ENCODE measurements at regions of chr7 and their contacts with region 1.

Region 1: GRCh38 chr7:50418086-50418515 is 32.0 kb downstream of the FIGNL1 start:
- DNase-seq: peak; percentile 86
- H3K4me3 ChIP-seq: no peak overlapping the region
- H3K27ac ChIP-seq: no peak overlapping the region
- H3K4me1 ChIP-seq: peaks cover 0 to 10% of the 10 kb centered on the region in 2 experiments; a peak in 1 of 4 replicates
- H3K27me3 ChIP-seq: no peaks in the 10 kb centered on the region
- CTCF ChIP-seq: peak; percentile 96
- EP300 ChIP-seq: no peak
- RAD21 ChIP-seq: peak; percentile 98

Region 2: DNA sequence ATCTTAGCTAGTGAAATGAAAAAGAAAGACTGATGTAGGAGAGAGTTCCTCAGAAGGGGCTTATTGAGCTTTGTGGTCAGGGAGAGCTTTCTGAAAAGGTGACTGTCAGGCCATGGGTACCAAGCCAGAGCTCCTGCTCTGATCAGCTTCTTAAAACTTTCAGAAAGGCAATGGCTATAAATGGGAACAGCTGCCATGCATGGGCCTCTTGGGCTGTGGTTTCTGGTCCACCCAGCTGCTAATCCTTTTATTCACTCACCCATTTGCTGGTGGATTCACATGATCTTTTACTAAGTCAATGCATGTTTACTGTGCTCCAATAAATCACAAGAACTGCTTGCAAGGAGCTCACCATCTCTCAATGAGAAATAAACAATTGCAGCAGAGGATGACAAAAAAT is 265.0 kb before region 1 on chr7:
- CTCF ChIA-PET with region 1: interaction called, 71 read pairs
- POLR2A ChIA-PET with region 1: no interaction called
- DNase-seq: no peak
- H3K4me3 ChIP-seq: no peak overlapping the region
- H3K27ac ChIP-seq: no peak overlapping the region
- H3K4me1 ChIP-seq: no peaks in the 10 kb centered on the region
- H3K27me3 ChIP-seq: no peaks in the 10 kb centered on the region
- CTCF ChIP-seq: no peak
- EP300 ChIP-seq: no peak
- RAD21 ChIP-seq: no peak

Region 3: DNA sequence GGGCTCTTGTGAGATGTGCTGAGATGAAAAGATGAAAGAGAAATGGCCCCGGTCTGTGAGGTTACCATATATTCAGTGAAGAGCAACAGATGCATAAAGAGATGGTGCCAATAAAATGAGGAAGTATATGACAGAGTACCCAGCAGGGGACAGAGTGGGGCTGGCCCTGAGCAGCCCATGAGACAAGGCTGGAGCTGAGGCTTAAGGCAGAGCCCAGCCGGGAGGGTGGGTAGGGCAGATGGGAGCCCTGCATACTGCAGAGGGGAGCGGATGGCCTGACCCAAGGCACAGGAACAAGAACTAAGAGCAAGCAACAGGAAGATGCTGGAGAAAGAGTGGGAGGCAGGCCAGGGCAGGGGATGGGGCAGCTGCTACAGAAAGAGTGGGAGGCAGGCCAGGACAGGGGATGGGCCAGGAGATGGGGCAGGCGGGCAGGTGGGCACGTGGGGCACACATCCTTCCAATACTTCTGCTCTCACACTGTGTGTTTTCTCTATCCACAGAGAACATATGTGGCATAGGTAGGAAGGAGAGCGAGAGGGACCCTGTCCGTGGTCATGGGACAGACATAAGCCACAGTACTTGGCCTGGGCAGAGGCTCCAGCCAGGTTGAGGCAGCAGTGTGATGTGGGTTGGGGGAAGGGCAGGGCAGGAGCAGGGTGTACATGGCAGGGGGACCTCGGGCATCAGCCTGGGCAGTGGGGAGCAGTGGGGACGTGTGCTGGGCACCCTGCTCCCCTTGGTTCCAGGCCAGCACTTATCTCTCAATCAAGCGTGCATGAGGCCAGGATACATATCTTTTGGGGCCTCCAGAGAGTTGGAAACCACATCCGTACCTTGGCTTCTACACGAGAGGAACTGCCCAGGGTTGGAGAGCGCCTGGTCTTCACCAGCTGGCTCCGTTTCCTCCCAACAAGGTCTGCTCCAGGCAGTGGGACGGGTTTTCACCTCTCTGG is 205.2 kb before region 1 on chr7:
- CTCF ChIA-PET with region 1: interaction called, 353 read pairs
- POLR2A ChIA-PET with region 1: no interaction called
- DNase-seq: no peak
- H3K4me3 ChIP-seq: no peak overlapping the region
- H3K27ac ChIP-seq: no peak overlapping the region
- H3K4me1 ChIP-seq: peaks cover 0 to 8% of the 10 kb centered on the region in 2 experiments; a peak in 1 of 4 replicates
- H3K27me3 ChIP-seq: no peaks in the 10 kb centered on the region
- CTCF ChIP-seq: no peak
- EP300 ChIP-seq: no peak
- RAD21 ChIP-seq: no peak

Region 4: GRCh38 chr7:50369143-50370026 is 48.7 kb before region 1 on chr7:
- CTCF ChIA-PET with region 1: interaction called, 12 read pairs
- POLR2A ChIA-PET with region 1: no interaction called
- DNase-seq: peak; percentile 57
- H3K4me3 ChIP-seq: no peak overlapping the region; a peak in 1 of 4 replicates
- H3K27ac ChIP-seq: no peak overlapping the region
- H3K4me1 ChIP-seq: no peaks in the 10 kb centered on the region
- H3K27me3 ChIP-seq: 0 out of 2 replicates have a peak, but pooled peaks cover 5% of the 10 kb centered on the region
- CTCF ChIP-seq: peak; percentile 51
- EP300 ChIP-seq: no peak
- RAD21 ChIP-seq: peak; percentile 74

Region 5: GRCh38 chr7:50397320-50397970 is 20.7 kb before region 1 on chr7:
- CTCF ChIA-PET with region 1: interaction called, 71 read pairs
- POLR2A ChIA-PET with region 1: no interaction called
- DNase-seq: no peak
- H3K4me3 ChIP-seq: no peak overlapping the region
- H3K27ac ChIP-seq: no peak overlapping the region
- H3K4me1 ChIP-seq: peaks cover 0 to 9% of the 10 kb centered on the region in 2 experiments; a peak in 1 of 4 replicates
- H3K27me3 ChIP-seq: peaks cover 39% of the 10 kb centered on the region
- CTCF ChIP-seq: no peak
- EP300 ChIP-seq: no peak
- RAD21 ChIP-seq: no peak

Region 6: DNA sequence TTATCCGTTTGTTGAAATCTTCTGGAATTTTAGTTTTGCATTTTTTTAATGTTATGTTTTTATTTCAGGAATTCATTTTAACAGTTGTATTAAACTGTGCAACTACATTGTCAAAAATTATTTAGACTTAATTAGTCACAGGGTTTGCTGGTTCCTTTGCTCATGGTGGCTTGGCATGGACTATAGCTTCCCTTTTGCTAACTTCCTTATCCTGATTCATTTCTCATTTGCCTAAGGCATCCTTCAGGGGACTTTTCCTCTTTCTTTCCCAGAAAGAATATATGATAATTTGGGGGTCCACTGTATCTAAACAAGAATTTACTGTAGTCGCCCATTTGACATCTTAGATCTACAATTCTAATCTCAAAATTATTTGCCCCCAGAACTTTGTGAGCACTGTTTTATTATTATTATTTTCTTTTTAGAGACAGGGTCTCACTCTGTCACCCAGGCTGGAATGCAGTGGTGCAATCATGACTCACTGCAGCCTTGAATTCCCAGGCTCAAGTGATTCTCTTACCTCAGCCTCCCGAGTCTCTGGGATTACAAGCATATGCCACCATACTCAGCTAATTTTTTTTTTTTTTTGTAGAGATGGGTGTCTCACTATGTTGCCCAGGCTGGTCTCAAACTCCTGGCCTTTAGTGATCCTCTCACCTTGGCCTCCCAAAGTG is 18.2 kb after region 1 on chr7:
- CTCF ChIA-PET with region 1: interaction called, 13 read pairs
- POLR2A ChIA-PET with region 1: no interaction called
- DNase-seq: no peak
- H3K4me3 ChIP-seq: no peak overlapping the region
- H3K27ac ChIP-seq: peak overlapping the region in 1 of 2 experiments; percentile 54; a peak in 2 of 4 replicates
- H3K4me1 ChIP-seq: peaks cover 0 to 11% of the 10 kb centered on the region in 2 experiments; a peak in 2 of 4 replicates
- H3K27me3 ChIP-seq: no peaks in the 10 kb centered on the region
- CTCF ChIP-seq: no peak
- EP300 ChIP-seq: no peak
- RAD21 ChIP-seq: no peak

Region 7: DNA sequence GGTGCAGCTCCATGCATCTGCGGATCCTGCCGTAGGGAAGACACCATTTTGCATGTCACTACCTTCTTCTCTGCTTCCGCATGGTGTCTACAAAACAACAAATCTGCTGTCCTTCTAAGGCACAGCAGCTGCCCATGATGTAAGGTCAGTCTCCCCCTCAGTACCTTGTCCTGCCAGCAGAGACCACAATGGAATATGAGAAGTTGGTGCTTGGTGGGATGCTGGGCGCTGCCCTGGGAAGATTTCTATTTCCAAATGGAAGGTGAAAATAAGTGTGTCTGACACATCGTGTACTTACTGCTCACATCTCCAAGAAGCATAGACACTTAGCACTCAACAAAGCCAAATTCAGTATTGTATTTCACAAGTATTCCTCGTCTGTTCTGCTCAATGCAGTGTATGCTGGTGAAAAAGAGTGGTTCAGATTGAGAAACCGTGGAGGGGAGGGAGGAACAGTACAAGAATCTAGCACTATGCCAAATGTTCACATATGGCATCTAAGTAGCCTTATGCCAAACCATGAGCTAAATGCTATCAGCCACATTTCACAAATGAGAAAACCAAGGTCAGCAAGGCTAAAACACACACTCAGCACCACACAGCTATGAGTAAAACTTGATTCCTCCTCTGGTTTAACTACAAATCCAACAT is 269.6 kb after region 1 on chr7:
- CTCF ChIA-PET with region 1: interaction called, 12 read pairs
- POLR2A ChIA-PET with region 1: no interaction called
- DNase-seq: no peak
- H3K4me3 ChIP-seq: no peak overlapping the region
- H3K27ac ChIP-seq: no peak overlapping the region
- H3K4me1 ChIP-seq: peaks cover 0 to 10% of the 10 kb centered on the region in 2 experiments; a peak in 1 of 4 replicates
- H3K27me3 ChIP-seq: no peaks in the 10 kb centered on the region
- CTCF ChIP-seq: no peak
- EP300 ChIP-seq: no peak
- RAD21 ChIP-seq: no peak

Measured in SK-N-SH (cell line).